ENCODE measurements at regions of chr14 and their contacts with region 1.

Region 1: GRCh38 chr14:30656190-30656632 is 34.1 kb downstream of the SCFD1 start:
- DNase-seq: peak; percentile 60
- H3K4me3 ChIP-seq: no peak overlapping the region
- H3K27ac ChIP-seq: no peak overlapping the region
- H3K4me1 ChIP-seq: no peaks in the 10 kb centered on the region
- CTCF ChIP-seq: peak; percentile 84

Region 2: DNA sequence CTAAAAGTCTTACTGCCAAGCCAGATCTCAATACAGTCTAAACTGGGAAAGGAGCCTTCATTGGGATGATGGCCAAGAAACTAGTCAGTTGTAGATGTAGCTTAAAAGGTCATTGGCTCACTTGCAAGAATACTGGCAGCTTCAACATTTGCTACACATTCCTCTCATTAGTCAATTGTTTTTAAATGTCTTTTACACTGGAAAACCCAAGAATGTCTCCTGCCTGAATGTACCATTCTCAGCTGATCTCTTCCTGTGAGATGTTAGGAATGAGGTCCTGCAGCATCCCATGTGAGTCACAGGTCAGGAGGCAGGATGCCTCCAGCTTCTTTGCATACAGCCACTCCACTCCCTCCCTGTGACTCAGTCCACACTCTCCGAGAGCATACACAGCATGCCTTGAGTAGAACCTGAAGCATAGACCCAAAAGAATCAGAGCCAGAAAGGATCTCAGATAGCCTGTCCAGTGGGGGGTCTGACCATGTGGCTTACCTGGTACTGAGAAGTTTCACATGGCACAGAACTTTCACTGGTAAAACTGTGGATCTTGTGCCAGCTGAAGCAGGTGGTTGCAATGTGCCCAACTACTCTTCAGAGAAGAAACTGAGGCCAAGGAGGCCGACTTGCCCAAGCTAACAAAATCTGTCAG is 607.4 kb after region 1 on chr14:
- CTCF ChIA-PET with region 1: no interaction called
- POLR2A ChIA-PET with region 1: no interaction called
- intact Hi-C with region 1: no loop called
- DNase-seq: no peak
- H3K4me3 ChIP-seq: no peak overlapping the region
- H3K27ac ChIP-seq: no peak overlapping the region
- H3K4me1 ChIP-seq: peaks cover 3% of the 10 kb centered on the region
- CTCF ChIP-seq: no peak

Region 3: GRCh38 chr14:31357279-31357678 is 701.1 kb after region 1 on chr14:
- CTCF ChIA-PET with region 1: no interaction called
- POLR2A ChIA-PET with region 1: no interaction called
- intact Hi-C with region 1: loop called (anchors 10 kb)
- DNase-seq: no peak
- H3K4me3 ChIP-seq: no peak overlapping the region
- H3K27ac ChIP-seq: no peak overlapping the region
- H3K4me1 ChIP-seq: peaks cover 22% of the 10 kb centered on the region
- CTCF ChIP-seq: no peak

Measured in OCI-LY7 (cell line).